Activated T-helper 2 cell treated with anti-CD3 and anti-CD28 coated beads, Interferon-gamma antibody, Interleukin-2, Interleukin-4, amounts not matched to agents 10 μg/mL and 5 μg/mL and 100 μg/mL, durations not matched to agents 14 hours and 24 hours and 36 hours (primary cell): ENCODE measurements at regions of chr12 and their contacts with region 1.

Region 1: DNA sequence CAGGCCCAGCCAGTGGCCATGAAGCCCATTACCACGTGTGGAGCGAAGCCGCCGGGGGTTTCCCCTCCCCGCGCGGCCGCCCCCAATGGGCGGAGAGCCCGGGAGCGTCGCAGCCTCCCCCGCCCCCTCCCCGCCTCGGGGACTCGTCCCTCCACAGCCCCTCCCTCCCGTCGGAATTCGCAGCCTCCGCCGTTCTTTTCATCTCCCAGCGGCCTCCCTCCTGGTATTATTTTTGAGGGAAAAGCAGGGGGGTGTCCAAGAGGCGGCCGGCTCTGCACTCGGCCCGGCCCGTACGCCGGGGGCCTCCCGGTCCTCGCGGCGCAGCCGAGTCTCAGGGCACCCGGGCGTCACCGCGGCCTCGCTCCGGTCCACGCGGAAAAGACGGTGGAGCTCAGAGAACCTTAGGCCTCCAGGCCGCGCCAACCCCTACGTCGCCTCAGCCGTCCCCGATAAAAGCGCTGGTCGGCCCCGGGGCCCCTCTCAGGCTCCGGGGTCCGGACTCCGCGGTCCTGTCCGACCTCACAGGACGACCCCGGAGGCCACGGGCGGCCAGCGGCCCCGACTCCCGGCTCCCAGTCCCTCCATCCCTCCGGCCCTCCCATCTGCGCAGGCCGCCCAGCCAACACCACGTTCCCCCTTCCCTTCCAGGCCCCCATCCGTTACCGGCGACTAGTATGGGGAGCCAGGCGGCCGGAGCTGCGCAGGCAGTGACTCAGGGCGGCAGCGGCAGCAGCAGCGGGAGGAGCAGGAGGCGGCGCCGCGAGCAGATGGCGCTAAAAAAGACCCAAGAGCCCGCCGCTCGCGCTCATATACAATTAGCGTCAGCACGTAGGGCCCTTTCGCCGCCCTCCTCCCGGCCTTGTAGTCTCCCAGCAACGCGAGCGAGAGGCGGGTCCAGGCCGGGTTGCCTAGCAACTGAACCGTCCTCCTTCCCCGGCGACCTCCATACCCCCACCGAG is at the start of gene NAP1L1:
- DNase-seq: peak; percentile 96
- H3K4me3 Mint-ChIP-seq: peak within 1 kb of the TSS; percentile 94
- H3K27ac Mint-ChIP-seq: peak within 1 kb of the TSS; percentile 99
- H3K4me1 Mint-ChIP-seq: peaks cover 44% of the 10 kb centered on the region
- H3K27me3 Mint-ChIP-seq: no peaks in the 10 kb centered on the region
- total RNA-seq, gene NAP1L1: 701 and 744 TPM in 2 replicates

Region 2: DNA sequence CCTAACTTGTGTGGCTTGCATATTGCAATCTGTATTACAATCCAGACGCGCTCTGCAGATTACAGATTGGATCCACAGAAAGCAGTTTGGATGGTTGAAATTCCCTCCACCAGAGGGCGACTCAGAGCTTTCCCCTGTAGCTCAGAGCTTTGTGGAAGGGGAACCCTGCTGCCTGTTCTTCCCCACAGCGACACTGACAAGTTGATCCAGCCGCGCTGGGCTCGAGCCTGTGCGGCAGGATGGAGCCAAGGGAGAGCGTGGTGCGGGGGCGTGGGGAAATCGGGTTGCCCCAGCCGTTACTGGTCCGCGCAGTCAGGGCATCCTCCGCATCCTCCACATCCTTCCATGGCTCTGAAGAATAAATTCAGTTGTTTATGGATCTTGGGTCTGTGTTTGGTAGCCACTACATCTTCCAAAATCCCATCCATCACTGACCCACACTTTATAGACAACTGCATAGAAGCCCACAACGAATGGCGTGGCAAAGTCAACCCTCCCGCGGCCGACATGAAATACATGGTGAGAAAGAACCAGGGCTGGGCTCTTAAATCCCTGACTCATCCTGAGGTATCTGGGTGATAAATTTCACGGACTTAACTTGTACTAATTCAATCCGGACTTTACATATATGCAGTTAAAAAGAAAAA is 749.7 kb before region 1 on chr12 and contains the start of gene GLIPR1L1:
- intact Hi-C with region 1: loop called (anchors 1 kb)
- DNase-seq: peak; percentile 68
- H3K4me3 Mint-ChIP-seq: peak within 1 kb of the TSS; percentile 73
- H3K27ac Mint-ChIP-seq: no peak within 1 kb of the TSS
- H3K4me1 Mint-ChIP-seq: peaks cover 23% of the 10 kb centered on the region
- H3K27me3 Mint-ChIP-seq: peaks cover 52% of the 10 kb centered on the region
- total RNA-seq, gene GLIPR1L1: not detected in 2 replicates

Region 3: GRCh38 chr12:75511116-75512048 is 572.8 kb before region 1 on chr12 and contains the start of gene KRR1:
- intact Hi-C with region 1: loop called (anchors 1 kb)
- DNase-seq: peak; percentile 91
- H3K4me3 Mint-ChIP-seq: peak within 1 kb of the TSS; percentile 96
- H3K27ac Mint-ChIP-seq: peak within 1 kb of the TSS; percentile 98
- H3K4me1 Mint-ChIP-seq: peaks cover 30% of the 10 kb centered on the region
- H3K27me3 Mint-ChIP-seq: no peaks in the 10 kb centered on the region
- total RNA-seq, gene KRR1: 114 and 119 TPM in 2 replicates

Region 4: GRCh38 chr12:76183459-76184186 is 99.4 kb after region 1 on chr12:
- intact Hi-C with region 1: loop called (anchors 1 kb)
- DNase-seq: peak; percentile 14
- H3K4me3 Mint-ChIP-seq: no peak overlapping the region
- H3K27ac Mint-ChIP-seq: no peak overlapping the region
- H3K4me1 Mint-ChIP-seq: peaks cover 30% of the 10 kb centered on the region
- H3K27me3 Mint-ChIP-seq: peaks cover 37% of the 10 kb centered on the region

Region 5: DNA sequence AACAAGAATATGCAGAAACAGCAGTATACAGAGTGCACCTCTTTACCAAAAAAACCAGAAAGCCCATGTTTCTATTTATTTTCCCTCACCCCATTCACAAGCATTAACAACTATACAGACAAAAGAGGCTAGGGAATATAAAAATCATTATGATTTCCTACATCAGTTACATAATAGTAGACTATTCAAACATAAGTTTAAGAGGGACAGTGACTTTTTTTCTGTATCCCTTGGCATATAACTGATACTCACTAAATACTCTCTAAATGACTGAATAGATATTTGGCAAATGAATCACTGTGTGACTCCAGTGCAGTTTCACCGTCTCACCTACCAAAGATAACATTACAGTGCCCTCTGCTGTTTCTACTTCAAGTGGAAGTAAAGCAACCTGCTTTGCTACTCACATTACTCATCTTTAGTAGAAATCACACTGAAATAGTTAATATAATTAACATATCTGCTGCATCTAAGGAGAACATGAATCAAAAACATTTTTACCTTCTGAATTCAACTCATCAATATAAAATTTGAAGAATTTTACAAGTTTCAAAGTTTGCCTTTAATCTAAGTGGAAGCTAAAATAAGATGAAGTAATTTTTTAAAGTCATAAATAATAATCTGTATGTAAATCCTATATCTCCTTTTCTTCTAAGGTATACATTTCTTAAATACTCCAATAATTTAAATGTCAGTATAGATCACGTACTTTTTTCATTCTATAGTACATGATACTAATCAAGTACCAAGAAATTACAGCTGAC is 371.6 kb after region 1 on chr12:
- intact Hi-C with region 1: loop called (anchors 5 kb)
- DNase-seq: no peak
- H3K4me3 Mint-ChIP-seq: no peak overlapping the region
- H3K27ac Mint-ChIP-seq: no peak overlapping the region
- H3K4me1 Mint-ChIP-seq: peaks cover 8% of the 10 kb centered on the region
- H3K27me3 Mint-ChIP-seq: no peaks in the 10 kb centered on the region

Region 6: GRCh38 chr12:76763743-76764675 is 679.8 kb after region 1 on chr12 and contains the start of gene ZDHHC17:
- intact Hi-C with region 1: loop called (anchors 5 kb)
- DNase-seq: peak; percentile 91
- H3K4me3 Mint-ChIP-seq: peak within 1 kb of the TSS; percentile 98
- H3K27ac Mint-ChIP-seq: peak within 1 kb of the TSS; percentile 94
- H3K4me1 Mint-ChIP-seq: peaks cover 28% of the 10 kb centered on the region
- H3K27me3 Mint-ChIP-seq: peaks cover 12% of the 10 kb centered on the region
- total RNA-seq, gene ZDHHC17: 26.7 and 28.6 TPM in 2 replicates